ENCODE measurements at regions of chr6 and their contacts with region 1.

Region 1: GRCh38 chr6:136792410-136793262 is at the start of gene MAP3K5:
- DNase-seq: peak; percentile 83 to 93
- H3K4me3 ChIP-seq: peak within 1 kb of the TSS; percentile 97
- H3K27ac ChIP-seq: peak within 1 kb of the TSS; percentile 87
- H3K4me1 ChIP-seq: peaks cover 39% of the 10 kb centered on the region
- H3K27me3 ChIP-seq: no peaks in the 10 kb centered on the region
- CTCF ChIP-seq: peak; percentile 91
- total RNA-seq, gene MAP3K5: 10.4 and 10.9 TPM in 2 replicates

Region 2: DNA sequence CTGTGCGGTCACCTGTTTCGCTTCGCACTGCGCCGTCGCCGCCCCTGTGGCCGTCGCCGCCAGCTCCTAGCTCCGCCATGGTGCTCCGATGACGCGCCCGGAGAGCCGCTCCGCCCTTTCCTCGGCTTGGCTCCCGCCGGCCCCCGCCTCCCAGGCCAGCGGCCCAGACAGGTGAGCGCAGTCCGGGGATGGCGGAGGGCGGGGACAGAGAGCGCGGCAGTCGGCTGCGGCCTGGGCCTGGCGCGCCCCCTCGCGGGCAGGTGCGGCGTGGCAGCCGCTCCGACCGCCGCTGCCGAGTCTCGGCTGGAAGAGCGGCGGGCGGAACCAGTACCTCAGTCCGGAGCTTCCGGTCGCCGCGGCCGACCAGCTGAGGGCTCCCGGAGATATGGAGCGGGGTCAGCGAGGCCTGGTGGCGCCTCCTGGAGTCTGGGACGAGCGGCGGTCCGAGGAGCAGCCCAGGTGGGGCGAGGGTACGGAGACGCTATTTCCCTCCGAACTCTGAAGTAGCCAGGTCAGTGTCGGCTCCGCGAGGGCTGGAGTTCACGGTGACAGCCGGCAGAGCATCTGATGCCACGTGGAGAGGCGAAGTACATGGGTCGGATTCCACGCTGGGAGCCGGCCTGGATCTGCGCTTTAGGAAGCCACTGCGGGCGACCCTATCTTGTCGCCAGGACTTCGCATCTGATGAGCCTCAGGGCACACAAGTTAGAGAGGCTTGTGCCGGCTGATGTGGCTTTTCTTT is 242.1 kb before region 1 on chr6 and contains the start of gene MAP7:
- CTCF ChIA-PET with region 1: interaction called, 13 read pairs
- POLR2A ChIA-PET with region 1: interaction called, 4 read pairs
- intact Hi-C with region 1: no loop called
- DNase-seq: peak; percentile 85 to 95
- H3K4me3 ChIP-seq: peak within 1 kb of the TSS; percentile 85
- H3K27ac ChIP-seq: peak within 1 kb of the TSS; percentile 49
- H3K4me1 ChIP-seq: peaks cover 28% of the 10 kb centered on the region
- H3K27me3 ChIP-seq: no peaks in the 10 kb centered on the region
- CTCF ChIP-seq: peak; percentile 92
- total RNA-seq, gene MAP7: 27.5 and 33.7 TPM in 2 replicates

Region 3: GRCh38 chr6:136607932-136608772 is 184.5 kb before region 1 on chr6:
- CTCF ChIA-PET with region 1: interaction called, 14 read pairs
- POLR2A ChIA-PET with region 1: interaction called, 16 read pairs
- intact Hi-C with region 1: loop called (anchors 1 kb)
- DNase-seq: peak; percentile 61 to 62
- H3K4me3 ChIP-seq: no peak overlapping the region
- H3K27ac ChIP-seq: peak overlapping the region; percentile 84
- H3K4me1 ChIP-seq: peaks cover 53% of the 10 kb centered on the region
- H3K27me3 ChIP-seq: no peaks in the 10 kb centered on the region
- CTCF ChIP-seq: peak; percentile 87

Region 4: DNA sequence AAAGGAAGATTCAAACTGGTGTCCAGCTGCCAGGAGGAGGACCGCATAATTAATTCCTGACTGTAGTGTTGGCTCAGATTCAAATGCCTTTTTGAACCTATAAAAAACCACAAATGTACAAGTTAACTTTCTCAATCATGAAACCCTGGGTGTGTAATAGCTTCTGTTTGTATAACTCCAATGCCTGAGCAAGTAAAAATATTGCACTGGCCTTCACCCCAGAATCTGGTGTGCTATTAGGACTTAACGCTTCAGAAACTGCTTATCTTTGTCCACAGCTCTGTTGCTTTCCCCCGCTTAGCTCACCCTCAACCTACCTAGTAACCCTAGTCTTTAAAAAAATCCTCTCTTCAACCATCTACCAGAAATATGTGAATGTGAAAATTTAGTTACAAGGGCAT is 123.3 kb before region 1 on chr6:
- CTCF ChIA-PET with region 1: interaction called, 11 read pairs
- POLR2A ChIA-PET with region 1: no interaction called
- intact Hi-C with region 1: no loop called
- DNase-seq: peak in 1 of 2 experiments; percentile 93
- H3K4me3 ChIP-seq: no peak overlapping the region; the same call in 1 of the 2 replicates
- H3K27ac ChIP-seq: peak overlapping the region; percentile 61
- H3K4me1 ChIP-seq: peaks cover 32% of the 10 kb centered on the region
- H3K27me3 ChIP-seq: no peaks in the 10 kb centered on the region
- CTCF ChIP-seq: no peak

Region 5: GRCh38 chr6:136696238-136696637 is 96.4 kb before region 1 on chr6:
- CTCF ChIA-PET with region 1: interaction called, 3 read pairs
- POLR2A ChIA-PET with region 1: no interaction called
- intact Hi-C with region 1: loop called (anchors 1 kb)
- DNase-seq: no peak
- H3K4me3 ChIP-seq: no peak overlapping the region
- H3K27ac ChIP-seq: no peak overlapping the region
- H3K4me1 ChIP-seq: peaks cover 19% of the 10 kb centered on the region
- H3K27me3 ChIP-seq: no peaks in the 10 kb centered on the region
- CTCF ChIP-seq: no peak

Region 6: DNA sequence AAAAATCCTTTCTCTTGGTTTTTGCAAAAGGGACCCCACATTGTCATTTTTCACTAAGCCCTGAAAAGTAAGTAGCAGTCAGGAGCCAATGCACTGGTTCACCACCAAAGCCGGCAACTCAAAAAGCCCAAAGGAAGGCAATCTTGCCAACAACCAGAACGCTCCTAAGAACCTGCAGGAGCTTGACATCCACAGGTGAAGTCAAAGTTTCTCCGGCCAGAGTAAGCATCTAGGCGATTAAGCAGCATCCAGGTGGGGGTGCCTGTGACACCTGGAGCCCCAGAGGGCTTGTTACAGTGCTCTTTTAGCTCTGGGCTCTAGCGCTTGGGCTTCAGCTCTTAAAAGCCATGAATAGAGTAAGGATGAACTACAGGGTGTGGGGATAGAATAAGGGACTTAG is 165.5 kb after region 1 on chr6:
- CTCF ChIA-PET with region 1: no interaction called
- POLR2A ChIA-PET with region 1: interaction called, 14 read pairs
- intact Hi-C with region 1: no loop called
- DNase-seq: no peak
- H3K4me3 ChIP-seq: no peak overlapping the region
- H3K27ac ChIP-seq: no peak overlapping the region
- H3K4me1 ChIP-seq: peaks cover 8% of the 10 kb centered on the region; the same call in 1 of the 2 replicates
- H3K27me3 ChIP-seq: no peaks in the 10 kb centered on the region
- CTCF ChIP-seq: no peak